ENCODE measurements at regions of chr5 and their contacts with region 1.

Region 1: GRCh38 chr5:133735327-133735726 is 123.0 kb upstream of the FSTL4 start:
- DNase-seq: peak; percentile 92
- H3K4me3 ChIP-seq: no peak overlapping the region
- H3K27ac ChIP-seq: peak overlapping the region; percentile 78
- H3K4me1 ChIP-seq: peaks cover 16% of the 10 kb centered on the region
- H3K27me3 ChIP-seq: no peaks in the 10 kb centered on the region
- CTCF ChIP-seq: no peak
- POLR2A ChIP-seq: no peak

Region 2: DNA sequence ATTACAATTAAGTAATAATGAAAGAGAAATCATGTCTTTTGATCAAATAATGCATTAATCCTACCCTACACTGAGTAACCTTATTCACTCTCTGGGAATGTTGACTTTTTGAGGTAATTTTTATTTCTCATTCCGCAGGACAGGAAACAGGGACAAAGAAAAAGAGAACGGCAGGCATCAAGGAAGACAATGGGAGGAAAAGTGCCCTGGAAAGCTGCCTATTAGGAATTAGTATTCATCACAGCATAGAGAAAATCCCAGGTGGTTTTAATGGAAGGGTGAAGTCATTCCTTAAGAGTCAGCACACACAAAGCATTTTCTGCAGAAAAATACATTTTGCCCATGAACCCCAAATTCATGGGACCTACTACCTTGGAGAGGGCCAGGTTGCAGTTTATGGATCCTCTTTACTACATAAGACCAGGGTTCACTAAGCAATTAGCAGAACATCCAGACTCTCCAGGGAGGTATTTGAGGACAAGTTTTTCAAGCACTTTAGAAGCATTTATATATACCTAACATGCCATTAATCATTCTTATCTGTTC is 132.4 kb before region 1 on chr5:
- CTCF ChIA-PET with region 1: no interaction called
- POLR2A ChIA-PET with region 1: no interaction called
- dilution Hi-C with region 1: no loop called
- intact Hi-C with region 1: loop called (anchors 2 kb)
- DNase-seq: peak; percentile 86
- H3K4me3 ChIP-seq: peak overlapping the region in 1 of 3 experiments; percentile 4
- H3K27ac ChIP-seq: peak overlapping the region; percentile 68
- H3K4me1 ChIP-seq: peaks cover 37% of the 10 kb centered on the region
- H3K27me3 ChIP-seq: no peaks in the 10 kb centered on the region
- CTCF ChIP-seq: no peak
- POLR2A ChIP-seq: no peak

Region 3: DNA sequence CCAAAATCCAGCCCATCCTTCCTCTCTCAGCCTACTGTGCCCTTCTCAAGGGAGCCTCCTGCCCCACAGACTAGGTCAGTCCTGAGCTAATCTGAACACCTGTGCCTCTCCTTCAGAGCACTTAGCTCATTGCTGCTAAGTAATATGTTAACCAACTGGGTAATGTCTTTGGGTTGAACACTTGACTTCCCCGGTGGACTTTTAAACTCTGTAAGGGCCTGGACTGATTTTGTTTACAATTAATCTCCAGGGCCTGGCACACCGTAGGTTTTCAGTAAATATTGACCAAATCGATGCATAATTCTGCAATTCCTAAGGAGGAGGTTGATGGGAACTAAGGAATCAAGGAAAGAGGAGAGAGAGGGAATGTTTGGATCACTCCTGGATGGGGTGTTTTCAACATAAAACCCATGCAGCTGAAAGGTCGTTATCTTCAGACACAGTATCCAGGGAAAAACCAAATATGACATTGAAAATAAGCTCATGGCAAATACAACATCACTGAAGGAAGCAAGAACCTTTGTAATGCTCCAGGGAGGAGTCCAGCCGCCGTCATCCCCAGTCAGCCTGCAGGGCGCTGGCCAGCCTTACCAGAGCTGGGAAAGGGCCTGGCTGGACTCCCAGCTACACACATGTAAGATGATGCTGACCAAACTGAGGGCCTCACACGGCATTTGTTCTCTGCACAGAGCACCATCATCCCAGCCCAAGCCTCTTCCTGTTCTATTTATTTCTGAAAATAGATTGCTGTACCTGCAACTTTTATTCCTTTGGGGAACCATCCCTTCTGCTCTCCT is 66.8 kb after region 1 on chr5:
- CTCF ChIA-PET with region 1: no interaction called
- POLR2A ChIA-PET with region 1: no interaction called
- dilution Hi-C with region 1: no loop called
- intact Hi-C with region 1: no loop called
- DNase-seq: no peak
- H3K4me3 ChIP-seq: no peak overlapping the region
- H3K27ac ChIP-seq: no peak overlapping the region
- H3K4me1 ChIP-seq: no peaks in the 10 kb centered on the region
- H3K27me3 ChIP-seq: peaks cover 0 to 10% of the 10 kb centered on the region in 2 experiments
- CTCF ChIP-seq: no peak
- POLR2A ChIP-seq: no peak

Measured in endothelial cell of umbilical vein (primary cell).